Activated naive CD4-positive, alpha-beta T cell treated with anti-CD3 and anti-CD28 coated beads for 36 hours (primary cell): ENCODE measurements at regions of chr6 and their contacts with region 1.

Region 1: GRCh38 chr6:291697-292505 is at the start of gene DUSP22:
- DNase-seq: peak; percentile 85
- H3K4me3 Mint-ChIP-seq: peak within 1 kb of the TSS; percentile 92
- H3K27ac Mint-ChIP-seq: peak within 1 kb of the TSS; percentile 95
- H3K4me1 Mint-ChIP-seq: peaks cover 67% of the 10 kb centered on the region
- H3K27me3 Mint-ChIP-seq: no peaks in the 10 kb centered on the region
- total RNA-seq, gene DUSP22: 44.6 to 46.9 TPM

Region 2: GRCh38 chr6:217048-217659 is 74.7 kb before region 1 on chr6:
- CTCF ChIA-PET with region 1: no interaction called
- intact Hi-C with region 1: no loop called
- DNase-seq: peak; percentile 54
- H3K4me3 Mint-ChIP-seq: no peak overlapping the region
- H3K27ac Mint-ChIP-seq: no peak overlapping the region
- H3K4me1 Mint-ChIP-seq: peaks cover 53% of the 10 kb centered on the region
- H3K27me3 Mint-ChIP-seq: peaks cover 4% of the 10 kb centered on the region

Region 3: DNA sequence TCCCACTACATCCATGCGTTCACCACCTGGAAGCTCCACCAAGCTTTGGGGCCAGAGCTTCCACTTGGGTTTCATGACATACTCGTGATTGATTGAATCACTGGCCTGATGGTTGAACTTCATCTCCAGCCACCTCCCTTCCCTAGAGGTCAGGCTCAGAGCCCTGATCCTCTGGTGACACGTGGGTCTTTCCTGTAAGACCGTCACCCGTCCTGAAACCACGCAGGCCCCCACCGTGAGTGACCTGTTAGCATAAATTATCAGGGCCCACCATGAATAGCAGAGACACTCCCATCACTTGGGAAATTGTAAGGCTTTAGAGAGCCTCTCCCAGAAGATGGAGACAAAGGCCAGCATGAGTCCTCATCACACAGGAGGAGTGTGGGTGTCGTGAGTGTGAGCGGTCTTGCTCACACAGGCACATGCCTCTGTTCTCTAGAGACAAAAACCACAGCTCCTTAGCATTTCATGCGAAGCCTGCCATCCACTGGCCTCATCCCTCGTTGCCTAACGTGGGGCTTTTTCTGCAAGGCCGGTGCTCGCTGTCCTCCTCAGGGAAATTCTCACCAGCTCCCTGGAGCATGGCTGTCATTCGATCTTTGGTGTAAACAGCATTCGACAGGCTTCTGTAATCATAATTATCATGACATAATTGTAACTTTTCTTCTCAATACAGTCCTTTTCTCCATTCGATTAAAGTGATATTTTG is 64.7 kb before region 1 on chr6:
- CTCF ChIA-PET with region 1: interaction called, 4 read pairs
- intact Hi-C with region 1: loop called (anchors 1 kb)
- DNase-seq: peak; percentile 60
- H3K4me3 Mint-ChIP-seq: no peak overlapping the region
- H3K27ac Mint-ChIP-seq: peak overlapping the region; percentile 95
- H3K4me1 Mint-ChIP-seq: peaks cover 65% of the 10 kb centered on the region
- H3K27me3 Mint-ChIP-seq: no peaks in the 10 kb centered on the region

Region 4: GRCh38 chr6:251920-252319 is 40.0 kb before region 1 on chr6:
- CTCF ChIA-PET with region 1: interaction called, 3 read pairs
- intact Hi-C with region 1: loop called (anchors 1 kb)
- DNase-seq: no peak
- H3K4me3 Mint-ChIP-seq: no peak overlapping the region
- H3K27ac Mint-ChIP-seq: peak overlapping the region; percentile 63
- H3K4me1 Mint-ChIP-seq: peaks cover 43% of the 10 kb centered on the region
- H3K27me3 Mint-ChIP-seq: no peaks in the 10 kb centered on the region

Region 5: DNA sequence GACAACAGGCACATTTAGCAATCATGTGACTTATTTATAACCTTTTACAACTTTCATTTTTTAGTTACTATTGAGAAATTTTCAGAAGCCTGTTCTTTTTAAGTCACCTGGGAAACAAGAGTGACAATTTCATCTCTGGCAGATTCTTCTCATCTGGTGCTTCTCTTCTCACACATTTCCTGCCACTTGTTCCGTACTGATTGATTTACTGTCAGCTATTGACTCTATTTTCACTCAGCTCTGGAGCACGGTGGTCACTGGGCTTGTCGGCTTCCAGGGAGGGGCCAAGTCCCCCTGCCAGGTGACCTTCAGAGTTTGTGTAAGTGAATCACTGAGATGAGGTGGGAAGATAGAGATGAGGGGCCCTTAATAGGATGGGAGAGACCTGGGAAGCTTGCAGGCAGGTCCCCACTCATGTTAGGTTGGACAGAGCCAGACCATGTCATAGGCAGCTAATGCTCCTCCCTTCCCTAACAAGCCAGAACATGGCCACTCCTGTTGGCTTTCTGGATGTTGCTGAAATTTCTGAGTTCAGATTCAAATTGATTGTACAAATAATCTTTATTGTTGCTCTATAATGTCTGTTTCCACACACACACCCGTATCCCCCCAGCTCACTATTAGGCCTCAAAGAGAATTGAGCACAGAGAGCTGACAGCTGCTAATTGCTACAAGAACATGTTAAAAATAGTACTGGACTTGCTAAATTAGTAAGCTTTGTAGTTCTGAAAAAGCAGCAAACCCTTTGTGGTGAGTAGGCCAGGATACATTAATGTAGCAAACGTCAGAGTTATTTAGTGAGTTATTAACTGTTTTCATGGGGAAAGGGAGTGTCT is 13.7 kb after region 1 on chr6:
- CTCF ChIA-PET with region 1: no interaction called
- intact Hi-C with region 1: no loop called
- DNase-seq: no peak
- H3K4me3 Mint-ChIP-seq: no peak overlapping the region
- H3K27ac Mint-ChIP-seq: no peak overlapping the region
- H3K4me1 Mint-ChIP-seq: no peaks in the 10 kb centered on the region
- H3K27me3 Mint-ChIP-seq: no peaks in the 10 kb centered on the region

Region 6: GRCh38 chr6:336159-337019 is 44.5 kb after region 1 on chr6:
- CTCF ChIA-PET with region 1: no interaction called
- intact Hi-C with region 1: loop called (anchors 2 kb)
- DNase-seq: no peak
- H3K4me3 Mint-ChIP-seq: no peak overlapping the region
- H3K27ac Mint-ChIP-seq: no peak overlapping the region
- H3K4me1 Mint-ChIP-seq: peaks cover 40% of the 10 kb centered on the region
- H3K27me3 Mint-ChIP-seq: no peaks in the 10 kb centered on the region

Region 7: GRCh38 chr6:506508-506907 is 214.6 kb after region 1 on chr6:
- CTCF ChIA-PET with region 1: no interaction called
- intact Hi-C with region 1: loop called (anchors 5 kb)
- DNase-seq: peak; percentile 89
- H3K4me3 Mint-ChIP-seq: peak overlapping the region; percentile 45
- H3K27ac Mint-ChIP-seq: peak overlapping the region; percentile 99
- H3K4me1 Mint-ChIP-seq: peaks cover 95% of the 10 kb centered on the region
- H3K27me3 Mint-ChIP-seq: no peaks in the 10 kb centered on the region